Activated B cell treated with CpG ODN at 0.5 μM for 24 hours (primary cell): ENCODE measurements at regions of chr19 and their contacts with region 1.

Region 1: DNA sequence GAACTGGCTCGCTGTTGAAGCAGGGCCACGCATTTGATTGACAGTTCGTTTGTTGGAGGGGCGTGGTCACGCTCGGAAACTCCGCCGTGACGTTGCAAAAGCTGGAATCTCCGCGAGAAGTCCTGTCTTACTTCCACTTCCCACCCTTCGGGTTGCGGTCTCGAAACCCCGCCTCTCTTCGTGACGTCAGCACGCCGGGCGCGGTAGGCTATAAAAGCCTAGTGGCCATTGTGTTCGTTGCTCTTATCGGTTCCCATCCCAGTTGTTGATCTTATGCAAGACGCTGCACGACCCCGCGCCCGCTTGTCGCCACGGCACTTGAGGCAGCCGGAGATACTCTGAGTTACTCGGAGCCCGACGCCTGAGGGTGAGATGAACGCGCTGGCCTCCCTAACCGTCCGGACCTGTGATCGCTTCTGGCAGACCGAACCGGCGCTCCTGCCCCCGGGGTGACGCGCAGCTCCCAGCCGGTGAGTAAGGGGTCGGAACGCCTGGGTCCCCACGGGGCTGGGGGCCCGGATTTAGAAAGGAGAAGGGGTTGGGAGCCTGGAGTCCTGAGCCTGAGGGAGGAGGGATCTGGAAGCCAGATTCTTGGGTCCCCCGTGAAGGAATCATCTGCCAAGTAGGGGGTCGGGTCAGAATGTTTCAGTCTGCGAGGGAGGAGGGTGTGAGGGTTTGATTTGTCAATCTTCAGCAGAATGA is at the start of gene PPP1R15A:
- DNase-seq: peak; percentile 99
- ATAC-seq: peak; percentile 35
- H3K4me3 Mint-ChIP-seq: peak within 1 kb of the TSS; percentile 100
- H3K27ac Mint-ChIP-seq: peak within 1 kb of the TSS; percentile 100
- H3K4me1 Mint-ChIP-seq: peaks cover 42% of the 10 kb centered on the region
- H3K27me3 Mint-ChIP-seq: no peaks in the 10 kb centered on the region
- CTCF ChIP-seq: no peak
- total RNA-seq, gene PPP1R15A: 115 and 123 TPM in 2 replicates

Region 2: DNA sequence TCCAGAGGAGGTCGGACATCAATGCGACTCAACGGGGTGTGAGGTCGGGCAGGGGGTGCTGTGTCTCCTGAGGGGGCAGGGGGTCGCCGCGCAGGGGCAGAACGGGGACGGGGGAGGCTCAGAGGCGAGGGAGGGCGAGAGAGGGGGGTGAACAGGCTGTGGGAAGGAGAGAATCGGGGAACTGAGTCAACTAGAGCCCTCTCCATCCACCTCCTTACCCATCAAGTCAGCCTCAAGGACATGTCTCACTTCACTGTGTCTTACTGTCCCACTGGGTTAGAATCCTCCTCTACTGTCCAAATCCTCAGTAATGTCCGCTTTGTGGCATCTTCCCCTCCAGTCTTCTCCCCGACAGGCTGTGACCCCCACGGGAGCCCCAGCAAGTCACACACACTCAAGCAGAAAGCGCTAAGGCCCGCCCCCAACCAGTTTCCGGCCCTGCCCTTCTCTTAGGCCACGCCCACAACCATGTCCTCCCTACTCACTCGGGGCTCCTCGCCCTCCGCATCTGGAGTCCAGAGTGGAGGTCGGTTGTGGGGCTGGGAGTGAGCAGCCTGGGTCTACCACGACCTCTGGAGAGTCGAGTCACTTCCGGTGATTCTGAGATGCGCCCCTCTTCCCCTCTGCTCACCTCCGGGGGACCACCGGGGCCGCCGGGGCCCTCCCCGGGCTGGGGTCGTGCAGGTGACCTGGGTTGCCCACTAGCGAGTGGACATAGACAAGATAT is 13.2 kb before region 1 on chr19:
- CTCF ChIA-PET with region 1: no interaction called
- POLR2A ChIA-PET with region 1: interaction called, 10 read pairs
- intact Hi-C with region 1: loop called (anchors 1 kb)
- DNase-seq: peak; percentile 66
- ATAC-seq: peak; percentile 84
- H3K4me3 Mint-ChIP-seq: peak overlapping the region; percentile 92
- H3K27ac Mint-ChIP-seq: peak overlapping the region; percentile 87
- H3K4me1 Mint-ChIP-seq: peaks cover 7% of the 10 kb centered on the region
- H3K27me3 Mint-ChIP-seq: no peaks in the 10 kb centered on the region
- CTCF ChIP-seq: no peak

Region 3: DNA sequence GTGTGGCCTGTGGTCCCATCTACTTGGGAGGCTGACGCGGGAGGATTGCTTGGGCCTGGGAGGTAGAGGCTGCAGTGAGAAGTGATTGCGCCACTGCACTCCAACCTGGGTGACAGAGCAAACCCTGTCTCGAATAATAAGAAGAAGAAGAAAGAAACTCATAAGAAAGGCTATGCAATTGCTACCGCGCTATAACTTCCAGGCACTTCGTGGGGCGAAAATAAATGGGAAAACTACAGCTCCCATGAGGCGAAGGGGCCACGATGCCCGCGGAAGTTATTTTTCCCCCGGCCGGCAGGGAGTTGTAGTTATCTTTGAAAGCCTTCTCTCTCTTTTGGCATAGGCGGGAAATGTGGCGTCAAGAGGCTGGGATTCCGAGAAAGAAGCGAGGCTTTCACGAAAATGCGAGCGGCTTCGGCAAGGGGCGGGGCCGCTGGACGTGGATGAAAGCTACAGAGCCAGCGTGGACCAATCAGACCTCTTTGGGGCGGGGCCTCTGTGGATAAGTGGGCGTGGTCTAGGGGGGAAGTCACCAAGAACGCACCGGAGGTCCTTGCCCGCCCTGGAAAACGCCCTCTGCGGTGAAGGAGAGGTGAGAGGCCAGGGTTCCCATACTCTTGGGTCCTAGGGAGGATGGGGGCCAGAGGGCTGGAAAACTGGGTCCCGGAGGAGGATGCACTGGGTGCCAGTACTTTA is 27.6 kb after region 1 on chr19 and contains the start of gene NUCB1:
- CTCF ChIA-PET with region 1: interaction called, 5 read pairs
- POLR2A ChIA-PET with region 1: interaction called, 55 read pairs
- intact Hi-C with region 1: loop called (anchors 1 kb)
- DNase-seq: peak; percentile 92
- ATAC-seq: peak; percentile 98
- H3K4me3 Mint-ChIP-seq: peak within 1 kb of the TSS; percentile 97
- H3K27ac Mint-ChIP-seq: peak within 1 kb of the TSS; percentile 93
- H3K4me1 Mint-ChIP-seq: peaks cover 35% of the 10 kb centered on the region
- H3K27me3 Mint-ChIP-seq: peaks cover 2% of the 10 kb centered on the region
- CTCF ChIP-seq: no peak
- total RNA-seq, gene NUCB1: 116 and 126 TPM in 2 replicates

Region 4: DNA sequence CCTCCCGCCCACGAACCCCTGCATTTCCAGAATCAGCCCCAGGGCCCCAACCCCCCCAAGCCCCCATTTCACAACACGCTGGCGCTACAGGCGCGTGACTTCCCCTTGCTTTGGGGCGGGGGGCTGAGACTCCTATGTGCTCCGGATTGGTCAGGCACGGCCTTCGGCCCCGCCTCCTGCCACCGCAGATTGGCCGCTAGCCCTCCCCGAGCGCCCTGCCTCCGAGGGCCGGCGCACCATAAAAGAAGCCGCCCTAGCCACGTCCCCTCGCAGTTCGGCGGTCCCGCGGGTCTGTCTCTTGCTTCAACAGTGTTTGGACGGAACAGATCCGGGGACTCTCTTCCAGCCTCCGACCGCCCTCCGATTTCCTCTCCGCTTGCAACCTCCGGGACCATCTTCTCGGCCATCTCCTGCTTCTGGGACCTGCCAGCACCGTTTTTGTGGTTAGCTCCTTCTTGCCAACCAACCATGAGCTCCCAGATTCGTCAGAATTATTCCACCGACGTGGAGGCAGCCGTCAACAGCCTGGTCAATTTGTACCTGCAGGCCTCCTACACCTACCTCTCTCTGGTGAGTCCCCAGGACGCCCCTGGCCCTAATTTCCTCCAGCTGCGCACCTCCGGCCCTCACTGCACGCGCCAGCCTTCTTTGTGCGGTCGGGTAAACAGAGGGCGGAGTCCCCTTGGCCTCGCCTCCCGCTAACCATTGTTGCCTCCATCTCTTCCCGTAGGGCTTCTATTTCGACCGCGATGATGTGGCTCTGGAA is 92.9 kb after region 1 on chr19 and contains the start of gene FTL:
- CTCF ChIA-PET with region 1: interaction called, 9 read pairs
- POLR2A ChIA-PET with region 1: interaction called, 179 read pairs
- intact Hi-C with region 1: loop called (anchors 1 kb)
- DNase-seq: peak; percentile 88
- ATAC-seq: peak; percentile 80
- H3K4me3 Mint-ChIP-seq: peak within 1 kb of the TSS; percentile 99
- H3K27ac Mint-ChIP-seq: peak within 1 kb of the TSS; percentile 99
- H3K4me1 Mint-ChIP-seq: peaks cover 70% of the 10 kb centered on the region
- H3K27me3 Mint-ChIP-seq: no peaks in the 10 kb centered on the region
- CTCF ChIP-seq: no peak
- total RNA-seq, gene FTL: 888 and 935 TPM in 2 replicates

Region 5: DNA sequence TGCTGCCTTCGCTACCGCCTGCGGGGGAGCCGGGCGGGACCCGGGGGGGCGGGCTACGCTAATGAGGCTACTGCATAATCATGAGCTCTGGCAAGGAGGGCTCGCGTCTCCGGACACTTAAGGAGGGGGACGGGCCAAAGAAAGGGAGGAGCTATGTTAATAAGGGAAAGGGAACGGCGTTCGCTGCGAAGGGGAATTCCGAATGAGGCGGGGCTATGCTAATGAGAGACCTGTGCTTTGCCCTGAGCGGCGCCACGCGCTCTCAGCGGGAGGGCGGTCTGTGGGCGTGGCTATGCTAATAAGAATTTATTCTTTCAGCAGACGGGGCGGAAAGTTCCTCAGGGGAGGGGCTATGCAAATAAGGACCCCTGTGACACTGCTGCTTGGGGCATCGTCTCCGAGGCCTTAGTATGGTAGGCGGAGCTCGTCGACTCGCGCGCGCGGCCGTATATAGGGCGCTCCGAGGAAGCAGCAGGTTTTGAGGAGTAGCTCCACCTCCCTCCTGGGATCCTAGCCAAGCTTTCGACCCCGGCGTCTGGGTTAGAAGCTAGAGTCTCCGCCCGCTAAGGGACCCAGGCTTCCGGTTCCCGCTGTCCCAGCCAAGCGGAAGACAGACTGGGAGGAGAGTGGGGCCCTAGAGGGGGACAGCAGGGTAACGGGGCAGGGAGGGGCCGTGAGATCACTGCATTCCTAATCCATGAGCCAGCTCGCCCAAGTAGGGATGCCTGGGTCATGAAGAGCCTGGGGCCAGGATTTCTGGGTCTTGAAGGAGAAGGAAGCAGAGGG is 768.0 kb after region 1 on chr19 and contains the start of gene RRAS:
- CTCF ChIA-PET with region 1: no interaction called
- POLR2A ChIA-PET with region 1: no interaction called
- intact Hi-C with region 1: loop called (anchors 1 kb)
- DNase-seq: peak; percentile 97
- ATAC-seq: peak; percentile 69
- H3K4me3 Mint-ChIP-seq: peak within 1 kb of the TSS; percentile 93
- H3K27ac Mint-ChIP-seq: peak within 1 kb of the TSS; percentile 96
- H3K4me1 Mint-ChIP-seq: peaks cover 59% of the 10 kb centered on the region
- H3K27me3 Mint-ChIP-seq: no peaks in the 10 kb centered on the region
- CTCF ChIP-seq: no peak
- total RNA-seq, gene RRAS: 4.8 and 5.1 TPM in 2 replicates